ENCODE measurements at regions of chr12 and their contacts with region 1.

Region 1: DNA sequence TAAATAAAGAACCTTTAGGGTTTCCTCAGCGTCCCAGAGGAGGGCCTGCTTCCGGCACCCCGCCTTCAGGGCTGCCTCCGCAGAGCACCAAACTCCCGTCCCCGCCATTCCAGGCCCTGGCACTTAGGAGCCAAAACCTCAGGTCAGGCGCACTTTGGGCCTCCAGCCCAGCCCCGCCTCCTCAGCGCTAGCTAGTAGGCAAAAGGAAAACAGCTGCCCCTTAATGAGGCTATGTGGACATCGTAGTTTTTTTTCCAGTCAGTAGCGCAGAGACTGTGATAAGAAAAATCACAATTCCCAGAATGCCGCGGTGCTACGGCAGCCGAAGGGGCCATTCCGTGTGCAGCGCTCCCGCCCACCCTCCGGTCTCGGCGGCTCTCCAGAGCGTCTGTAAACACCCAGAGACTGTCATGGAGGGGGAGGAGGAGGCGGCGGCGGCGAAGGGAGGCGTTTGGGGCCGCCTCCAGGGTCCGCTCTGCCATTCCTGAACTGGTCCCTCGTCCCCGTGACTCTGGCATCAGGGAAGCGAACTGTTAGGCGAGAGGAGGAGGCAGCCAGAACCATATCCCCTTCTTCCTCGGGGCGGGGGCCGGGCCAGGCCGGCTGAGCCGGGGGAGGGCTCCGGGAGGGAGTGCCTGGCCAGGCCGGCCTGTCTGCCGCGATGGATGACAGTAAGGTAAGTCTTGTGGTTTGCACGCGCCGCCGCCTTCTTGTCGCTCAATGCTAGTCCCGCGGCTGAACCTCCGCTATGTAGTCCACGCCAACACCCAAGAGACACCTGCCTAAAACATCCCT is at the start of gene CREBL2:
- DNase-seq: peak; percentile 61 to 91 (median 89)
- ATAC-seq: peak; percentile 97
- H3K4me3 ChIP-seq: peak within 1 kb of the TSS; percentile 94
- H3K4me3 Mint-ChIP-seq: peak within 1 kb of the TSS; percentile 84 to 99 (median 93)
- H3K27ac ChIP-seq: peak within 1 kb of the TSS; percentile 98
- H3K27ac Mint-ChIP-seq: peak within 1 kb of the TSS; percentile 91 to 100 (median 99)
- H3K4me1 ChIP-seq: peaks cover 12 to 18% of the 10 kb centered on the region in 2 donors
- H3K4me1 Mint-ChIP-seq: peaks cover 38 to 74% (median 57%) of the 10 kb centered on the region in 7 donors
- H3K27me3 ChIP-seq: no peaks in the 10 kb centered on the region
- H3K27me3 Mint-ChIP-seq: no peaks in the 10 kb centered on the region
- total RNA-seq, gene CREBL2: 17.3 to 39.5 (median 24.9) TPM

Region 2: GRCh38 chr12:12115514-12115913 is 496.2 kb before region 1 on chr12:
- CTCF ChIA-PET with region 1: no interaction called
- POLR2A ChIA-PET with region 1: no interaction called
- intact Hi-C with region 1: no loop called
- DNase-seq: no peak
- ATAC-seq: no peak
- H3K4me3 ChIP-seq: no peak overlapping the region
- H3K4me3 Mint-ChIP-seq: no peak overlapping the region
- H3K27ac ChIP-seq: no peak overlapping the region
- H3K27ac Mint-ChIP-seq: no peak overlapping the region
- H3K4me1 ChIP-seq: no peaks in the 10 kb centered on the region
- H3K4me1 Mint-ChIP-seq: peaks cover 0 to 4% (median 0%) of the 10 kb centered on the region in 7 donors
- H3K27me3 ChIP-seq: no peaks in the 10 kb centered on the region
- H3K27me3 Mint-ChIP-seq: peaks cover 0 to 2% (median 0%) of the 10 kb centered on the region in 5 donors

Region 3: GRCh38 chr12:12628013-12628412 is 16.3 kb after region 1 on chr12:
- CTCF ChIA-PET with region 1: interaction called, 3 read pairs
- POLR2A ChIA-PET with region 1: interaction called, 40 read pairs
- intact Hi-C with region 1: loop called in 1 of 2 experiments (anchors 1 kb)
- DNase-seq: no peak
- ATAC-seq: no peak
- H3K4me3 ChIP-seq: no peak overlapping the region
- H3K4me3 Mint-ChIP-seq: peak overlapping the region in 2 of 10 donors; percentile 21 to 36
- H3K27ac ChIP-seq: no peak overlapping the region
- H3K27ac Mint-ChIP-seq: peak overlapping the region in 3 of 9 donors; percentile 14 to 65 (median 15)
- H3K4me1 ChIP-seq: peaks cover 10 to 40% of the 10 kb centered on the region in 2 donors
- H3K4me1 Mint-ChIP-seq: peaks cover 40 to 86% (median 83%) of the 10 kb centered on the region in 7 donors
- H3K27me3 ChIP-seq: no peaks in the 10 kb centered on the region
- H3K27me3 Mint-ChIP-seq: no peaks in the 10 kb centered on the region

Region 4: DNA sequence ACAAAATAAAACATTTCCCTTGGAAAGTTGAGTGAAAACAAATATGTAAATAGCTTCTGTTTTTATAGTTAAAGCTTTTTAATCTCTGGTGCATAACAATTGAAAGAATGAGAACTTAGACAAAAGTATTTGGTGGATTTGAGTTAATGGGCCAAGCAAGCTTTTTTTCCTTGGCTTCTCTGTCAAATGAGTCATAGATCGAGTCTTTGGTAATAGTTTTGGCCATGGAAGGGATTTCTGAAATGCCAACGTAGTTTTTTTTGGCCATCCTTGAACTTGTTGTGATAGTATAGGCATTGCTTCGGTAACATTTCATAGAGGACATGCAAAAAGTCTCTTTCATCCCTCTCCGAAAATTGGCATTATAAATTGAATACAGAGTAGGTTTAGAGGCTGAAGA is 49.4 kb after region 1 on chr12:
- CTCF ChIA-PET with region 1: interaction called, 3 read pairs
- POLR2A ChIA-PET with region 1: interaction called, 5 read pairs
- intact Hi-C with region 1: loop called in 1 of 2 experiments (anchors 1 kb)
- DNase-seq: no peak
- ATAC-seq: no peak
- H3K4me3 ChIP-seq: no peak overlapping the region
- H3K4me3 Mint-ChIP-seq: no peak overlapping the region
- H3K27ac ChIP-seq: no peak overlapping the region
- H3K27ac Mint-ChIP-seq: peak overlapping the region in 1 of 9 donors; percentile 82
- H3K4me1 ChIP-seq: no peaks in the 10 kb centered on the region
- H3K4me1 Mint-ChIP-seq: peaks cover 0 to 3% (median under 1%) of the 10 kb centered on the region in 7 donors
- H3K27me3 ChIP-seq: no peaks in the 10 kb centered on the region
- H3K27me3 Mint-ChIP-seq: no peaks in the 10 kb centered on the region

Region 5: DNA sequence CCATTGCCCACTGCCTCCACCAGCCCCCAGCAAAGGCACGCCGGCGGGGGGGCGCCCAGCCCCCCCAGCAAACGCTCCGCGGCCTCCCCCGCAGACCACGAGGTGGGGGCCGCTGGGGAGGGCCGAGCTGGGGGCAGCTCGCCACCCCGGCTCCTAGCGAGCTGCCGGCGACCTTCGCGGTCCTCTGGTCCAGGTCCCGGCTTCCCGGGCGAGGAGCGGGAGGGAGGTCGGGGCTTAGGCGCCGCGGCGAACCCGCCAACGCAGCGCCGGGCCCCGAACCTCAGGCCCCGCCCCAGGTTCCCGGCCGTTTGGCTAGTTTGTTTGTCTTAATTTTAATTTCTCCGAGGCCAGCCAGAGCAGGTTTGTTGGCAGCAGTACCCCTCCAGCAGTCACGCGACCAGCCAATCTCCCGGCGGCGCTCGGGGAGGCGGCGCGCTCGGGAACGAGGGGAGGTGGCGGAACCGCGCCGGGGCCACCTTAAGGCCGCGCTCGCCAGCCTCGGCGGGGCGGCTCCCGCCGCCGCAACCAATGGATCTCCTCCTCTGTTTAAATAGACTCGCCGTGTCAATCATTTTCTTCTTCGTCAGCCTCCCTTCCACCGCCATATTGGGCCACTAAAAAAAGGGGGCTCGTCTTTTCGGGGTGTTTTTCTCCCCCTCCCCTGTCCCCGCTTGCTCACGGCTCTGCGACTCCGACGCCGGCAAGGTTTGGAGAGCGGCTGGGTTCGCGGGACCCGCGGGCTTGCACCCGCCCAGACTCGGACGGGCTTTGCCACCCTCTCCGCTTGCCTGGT is 105.3 kb after region 1 on chr12 and contains the start of gene CDKN1B:
- CTCF ChIA-PET with region 1: no interaction called
- POLR2A ChIA-PET with region 1: interaction called, 23 read pairs
- intact Hi-C with region 1: loop called (anchors 1 to 5 kb)
- DNase-seq: peak; percentile 68 to 91 (median 87)
- ATAC-seq: peak; percentile 77
- H3K4me3 ChIP-seq: peak within 1 kb of the TSS; percentile 94
- H3K4me3 Mint-ChIP-seq: peak within 1 kb of the TSS; percentile 87 to 100 (median 98)
- H3K27ac ChIP-seq: peak within 1 kb of the TSS; percentile 99
- H3K27ac Mint-ChIP-seq: peak within 1 kb of the TSS; percentile 97 to 99 (median 99)
- H3K4me1 ChIP-seq: peaks cover 24 to 39% of the 10 kb centered on the region in 2 donors
- H3K4me1 Mint-ChIP-seq: peaks cover 43 to 66% (median 55%) of the 10 kb centered on the region in 7 donors
- H3K27me3 ChIP-seq: no peaks in the 10 kb centered on the region
- H3K27me3 Mint-ChIP-seq: no peaks in the 10 kb centered on the region
- total RNA-seq, gene CDKN1B: 105 to 205 (median 191) TPM

Region 6: GRCh38 chr12:12927211-12928079 is 315.7 kb after region 1 on chr12:
- CTCF ChIA-PET with region 1: no interaction called
- POLR2A ChIA-PET with region 1: no interaction called
- intact Hi-C with region 1: no loop called
- DNase-seq: peak in 7 of 9 donors; percentile 22 to 81 (median 46)
- ATAC-seq: peak; percentile 49
- H3K4me3 ChIP-seq: peak overlapping the region; percentile 35
- H3K4me3 Mint-ChIP-seq: peak overlapping the region in 6 of 10 donors; percentile 23 to 85 (median 58)
- H3K27ac ChIP-seq: peak overlapping the region; percentile 21
- H3K27ac Mint-ChIP-seq: peak overlapping the region in 2 of 9 donors; percentile 41 to 73
- H3K4me1 ChIP-seq: no peaks in the 10 kb centered on the region
- H3K4me1 Mint-ChIP-seq: peaks cover 0 to 11% (median 0%) of the 10 kb centered on the region in 7 donors
- H3K27me3 ChIP-seq: no peaks in the 10 kb centered on the region
- H3K27me3 Mint-ChIP-seq: peaks cover 0 to 12% (median 4%) of the 10 kb centered on the region in 5 donors